ENCODE measurements at regions of chr9 and their contacts with region 1.

Region 1: GRCh38 chr9:132507746-132508469 is 74.5 kb upstream of the BARHL1 start:
- DNase-seq: no peak
- ATAC-seq: peak; percentile 70 to 74
- H3K4me3 ChIP-seq: no peak overlapping the region
- H3K27ac ChIP-seq: no peak overlapping the region
- H3K4me1 ChIP-seq: no peaks in the 10 kb centered on the region
- H3K27me3 ChIP-seq: peaks cover 31% of the 10 kb centered on the region
- CTCF ChIP-seq: peak; percentile 70

Region 2: GRCh38 chr9:132644251-132644650 is 136.3 kb after region 1 on chr9:
- intact Hi-C with region 1: no loop called
- DNase-seq: no peak
- ATAC-seq: no peak
- H3K4me3 ChIP-seq: no peak overlapping the region
- H3K27ac ChIP-seq: no peak overlapping the region
- H3K4me1 ChIP-seq: no peaks in the 10 kb centered on the region
- H3K27me3 ChIP-seq: no peaks in the 10 kb centered on the region
- CTCF ChIP-seq: no peak

Region 3: DNA sequence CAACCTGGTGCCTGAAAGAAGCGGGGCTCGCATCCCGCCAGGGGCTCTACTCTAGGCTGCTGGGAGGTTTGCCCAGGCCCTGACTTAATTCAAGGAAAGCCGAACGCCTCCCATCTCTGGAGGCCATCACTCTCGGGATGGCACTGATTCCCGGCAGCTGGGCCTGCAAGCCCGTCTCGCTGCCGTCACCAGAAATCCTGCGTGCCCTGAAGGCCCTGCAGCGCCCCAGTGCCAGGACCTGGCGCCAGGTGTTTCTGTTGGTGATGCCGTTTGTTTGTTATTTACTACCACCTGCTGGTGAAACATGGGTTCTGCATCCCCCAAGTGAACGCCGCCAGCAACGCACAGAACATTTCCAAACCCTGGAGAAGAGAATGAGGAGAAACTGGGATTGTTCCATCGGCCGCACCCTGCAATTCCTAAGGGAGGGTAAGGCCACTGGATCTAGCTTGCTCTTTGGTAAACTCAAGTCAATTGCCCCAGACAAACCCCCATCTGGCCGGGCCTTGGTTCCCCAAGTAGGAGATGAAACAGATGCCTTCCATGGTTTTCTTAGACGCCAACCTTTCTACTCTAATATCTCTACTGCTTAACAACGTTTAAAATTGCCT is 292.2 kb after region 1 on chr9:
- intact Hi-C with region 1: loop called (anchors 10 kb)
- DNase-seq: peak; percentile 84
- ATAC-seq: peak; percentile 88 to 89
- H3K4me3 ChIP-seq: no peak overlapping the region
- H3K27ac ChIP-seq: no peak overlapping the region
- H3K4me1 ChIP-seq: peaks cover 17% of the 10 kb centered on the region
- H3K27me3 ChIP-seq: no peaks in the 10 kb centered on the region
- CTCF ChIP-seq: peak; percentile 95